Activated T-helper 1 cell treated with anti-CD3 and anti-CD28 coated beads, Interleukin-12 subunit alpha, Interleukin-12 subunit beta, Interleukin-2, Interleukin-4 antibody, amounts not matched to agents 30 ng/mL and 10 ng/mL and 1 ng/mL, durations not matched to agents 14 hours and 24 hours and 36 hours (primary cell): ENCODE measurements at regions of chr18 and their contacts with region 1.

Region 1: GRCh38 chr18:9117980-9118841 is 15.7 kb downstream of the NDUFV2 start:
- DNase-seq: no peak
- H3K4me3 Mint-ChIP-seq: peak overlapping the region; percentile 64
- H3K27ac Mint-ChIP-seq: peak overlapping the region; percentile 81
- H3K4me1 Mint-ChIP-seq: peaks cover 83% of the 10 kb centered on the region
- H3K27me3 Mint-ChIP-seq: no peaks in the 10 kb centered on the region

Region 2: DNA sequence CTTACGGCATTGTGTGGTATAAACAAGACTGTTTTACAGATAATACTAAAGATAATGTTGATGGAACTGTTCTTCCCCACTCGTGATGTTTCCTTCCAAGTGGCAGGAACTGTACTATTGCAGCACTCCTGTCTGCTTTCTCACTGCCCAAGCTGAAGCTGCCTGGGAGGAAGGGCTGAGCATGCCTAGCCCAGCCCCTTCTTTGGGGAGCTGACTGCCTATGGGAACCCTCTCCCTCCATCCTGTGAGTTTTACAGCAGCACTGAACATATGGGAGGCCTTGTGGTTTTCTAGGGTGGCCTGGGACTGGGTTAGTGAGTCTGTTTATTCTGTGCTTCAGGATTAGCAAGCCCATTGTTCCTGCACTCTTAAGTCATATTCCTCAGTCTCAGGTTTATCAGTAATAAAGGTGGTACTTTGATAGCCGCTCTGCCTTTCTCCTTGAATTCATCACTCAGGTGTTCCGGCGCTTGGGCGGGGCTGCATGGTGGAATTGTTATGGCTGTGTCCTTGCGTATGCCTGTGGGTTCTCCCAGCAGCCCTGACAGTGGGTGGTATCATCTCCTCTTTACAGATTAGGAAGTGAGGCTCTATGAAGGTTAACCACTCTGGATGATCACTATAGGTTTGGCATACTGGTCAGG is 1171.4 kb before region 1 on chr18:
- intact Hi-C with region 1: loop called (anchors 10 kb)
- DNase-seq: peak; percentile 7
- H3K4me3 Mint-ChIP-seq: peak overlapping the region; percentile 85
- H3K27ac Mint-ChIP-seq: peak overlapping the region; percentile 57
- H3K4me1 Mint-ChIP-seq: peaks cover 12% of the 10 kb centered on the region
- H3K27me3 Mint-ChIP-seq: no peaks in the 10 kb centered on the region

Region 3: DNA sequence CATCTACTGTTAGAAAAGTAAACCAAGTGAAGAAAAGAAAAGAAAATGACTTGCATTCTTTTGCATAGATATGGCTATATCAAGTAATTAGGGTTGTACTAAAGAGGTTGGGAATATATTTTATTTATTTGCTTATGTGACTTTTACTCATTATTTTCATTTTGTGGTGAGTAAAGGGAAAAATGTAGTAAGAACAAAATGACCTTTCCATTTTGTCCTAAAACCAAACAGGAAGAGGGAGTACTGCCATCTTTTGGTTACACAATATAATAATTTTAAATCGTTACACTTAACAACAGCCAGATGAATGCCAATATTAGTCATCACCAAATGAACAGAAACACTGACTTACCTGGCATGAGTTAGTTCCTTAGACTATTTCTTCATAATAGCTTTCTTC is 63.0 kb before region 1 on chr18:
- intact Hi-C with region 1: no loop called
- DNase-seq: no peak
- H3K4me3 Mint-ChIP-seq: no peak overlapping the region
- H3K27ac Mint-ChIP-seq: no peak overlapping the region
- H3K4me1 Mint-ChIP-seq: peaks cover 8% of the 10 kb centered on the region
- H3K27me3 Mint-ChIP-seq: peaks cover 2% of the 10 kb centered on the region

Region 4: GRCh38 chr18:9082711-9083510 is 35.3 kb before region 1 on chr18:
- intact Hi-C with region 1: loop called (anchors 1 kb)
- DNase-seq: peak; percentile 51
- H3K4me3 Mint-ChIP-seq: peak overlapping the region; percentile 75
- H3K27ac Mint-ChIP-seq: peak overlapping the region; percentile 98
- H3K4me1 Mint-ChIP-seq: peaks cover 50% of the 10 kb centered on the region
- H3K27me3 Mint-ChIP-seq: no peaks in the 10 kb centered on the region

Region 5: GRCh38 chr18:9095297-9096006 is 22.8 kb before region 1 on chr18:
- intact Hi-C with region 1: loop called (anchors 1 kb)
- DNase-seq: peak; percentile 61
- H3K4me3 Mint-ChIP-seq: peak overlapping the region; percentile 66
- H3K27ac Mint-ChIP-seq: peak overlapping the region; percentile 100
- H3K4me1 Mint-ChIP-seq: peaks cover 71% of the 10 kb centered on the region
- H3K27me3 Mint-ChIP-seq: no peaks in the 10 kb centered on the region

Region 6: GRCh38 chr18:9102508-9103375 is 15.5 kb before region 1 on chr18 and contains the start of gene NDUFV2:
- intact Hi-C with region 1: loop called (anchors 1 kb)
- DNase-seq: peak; percentile 98
- H3K4me3 Mint-ChIP-seq: peak within 1 kb of the TSS; percentile 95
- H3K27ac Mint-ChIP-seq: peak within 1 kb of the TSS; percentile 98
- H3K4me1 Mint-ChIP-seq: peaks cover 63% of the 10 kb centered on the region
- H3K27me3 Mint-ChIP-seq: no peaks in the 10 kb centered on the region
- total RNA-seq, gene NDUFV2: 381 and 391 TPM in 2 replicates

Region 7: GRCh38 chr18:9130806-9131205 is 12.6 kb after region 1 on chr18:
- intact Hi-C with region 1: loop called (anchors 1 kb)
- DNase-seq: no peak
- H3K4me3 Mint-ChIP-seq: no peak overlapping the region
- H3K27ac Mint-ChIP-seq: no peak overlapping the region
- H3K4me1 Mint-ChIP-seq: peaks cover 47% of the 10 kb centered on the region
- H3K27me3 Mint-ChIP-seq: no peaks in the 10 kb centered on the region